ENCODE measurements at regions of chr14 and their contacts with region 1.

Region 1: DNA sequence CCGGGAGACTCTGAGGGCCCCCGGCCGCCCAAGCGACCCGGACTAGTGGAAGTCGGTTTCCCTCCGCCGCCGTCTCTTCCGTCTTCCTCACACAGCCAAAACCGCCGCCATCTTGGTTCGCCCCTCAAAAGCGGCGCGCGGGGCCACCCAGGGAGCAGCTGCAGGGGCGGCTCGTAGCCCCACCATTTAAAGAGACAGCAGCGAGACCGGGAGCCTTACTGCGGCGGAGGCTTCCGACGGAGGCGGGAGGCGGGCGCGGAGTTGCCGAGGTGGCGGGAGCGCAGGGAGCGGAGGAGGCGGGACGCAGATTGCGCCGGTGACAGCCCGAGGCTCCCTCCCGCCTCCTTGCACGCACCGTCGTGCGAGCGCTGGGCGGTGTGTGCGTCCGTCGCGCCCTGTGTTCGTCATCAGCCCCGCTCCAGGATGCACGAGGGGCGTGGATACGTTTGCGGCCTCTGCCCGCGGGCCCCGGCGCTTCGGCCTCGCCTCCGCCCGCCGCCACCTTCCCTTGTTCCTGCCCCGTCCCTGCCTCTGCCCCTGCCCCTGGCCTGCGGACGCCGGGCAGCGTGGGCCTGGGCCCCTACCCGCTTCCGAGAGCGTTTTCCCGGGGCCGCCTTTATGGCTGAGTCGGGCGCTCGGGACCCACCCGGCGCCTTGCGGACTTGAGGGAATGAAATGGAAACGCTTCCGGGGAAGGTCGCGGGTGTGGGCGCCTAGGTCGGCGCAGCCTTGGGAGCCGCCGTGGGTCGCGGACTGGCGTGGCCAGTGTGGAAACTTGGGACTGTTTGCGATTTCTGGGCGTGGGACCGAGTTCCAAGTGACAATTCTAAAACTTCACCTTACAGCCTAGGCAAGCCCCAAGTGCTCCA is at the start of gene PPP4R3A:
- DNase-seq: peak; percentile 88
- ATAC-seq: peak; percentile 87
- H3K4me3 ChIP-seq: peak within 1 kb of the TSS; percentile 99
- H3K27ac ChIP-seq: peak within 1 kb of the TSS; percentile 97
- H3K4me1 ChIP-seq: peaks cover 5% of the 10 kb centered on the region
- H3K27me3 ChIP-seq: no peaks in the 10 kb centered on the region
- CTCF ChIP-seq: no peak
- EP300 ChIP-seq: peak; percentile 54 to 61; a peak in 2 of 4 replicates
- POLR2A ChIP-seq: peak; percentile 95
- RAD21 ChIP-seq: no peak
- polyA plus RNA-seq, gene PPP4R3A: 19.4 to 28.2 TPM

Region 2: DNA sequence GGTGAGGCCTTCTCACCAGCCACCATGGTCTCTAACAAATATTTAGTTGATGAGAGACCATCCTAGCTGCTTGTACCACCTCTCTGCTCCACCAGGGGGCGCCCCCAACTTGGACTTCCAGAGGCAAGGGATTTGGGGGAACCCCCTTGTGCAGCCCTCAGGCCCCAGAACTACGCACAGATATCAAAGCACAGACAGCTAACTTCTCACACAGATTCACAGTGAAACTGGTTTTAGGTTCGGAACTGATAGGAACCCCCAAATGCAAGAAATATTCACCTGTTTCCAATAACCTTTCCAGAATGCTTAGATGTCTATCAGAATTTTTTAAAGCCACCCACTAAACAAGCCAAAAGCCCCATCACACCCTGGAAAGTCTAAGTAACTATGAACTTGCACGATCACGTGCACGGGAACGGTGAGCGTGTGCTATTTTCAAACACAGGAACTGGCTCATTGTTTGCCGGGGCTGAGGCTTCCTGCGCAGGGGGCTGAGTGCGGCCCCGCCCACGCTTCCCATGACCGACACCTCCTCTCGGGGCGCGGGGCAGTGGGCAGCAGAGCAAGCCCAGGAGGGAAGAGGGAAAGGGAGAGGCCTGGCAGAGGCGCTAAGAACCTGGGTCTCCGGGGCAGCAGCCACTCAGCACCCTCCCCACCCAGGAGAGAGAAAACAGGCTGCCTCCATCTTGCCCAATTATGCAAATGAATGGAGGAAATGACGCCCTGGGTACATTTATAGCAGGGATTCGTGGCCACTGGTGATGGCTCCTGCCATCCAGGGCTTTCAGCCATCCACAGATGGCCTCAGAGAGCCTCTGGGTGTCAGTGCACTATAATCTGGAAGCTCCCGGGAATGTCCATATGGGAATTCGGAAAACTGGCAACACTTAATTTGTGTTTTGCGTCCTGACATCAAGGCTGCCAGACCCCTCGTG is 186.5 kb before region 1 on chr14:
- CTCF ChIA-PET with region 1: no interaction called
- POLR2A ChIA-PET with region 1: no interaction called
- RAD21 ChIA-PET with region 1: interaction called, 6 read pairs
- SMC1A ChIA-PET with region 1: interaction called, 3 read pairs
- in situ Hi-C with region 1: no loop called
- intact Hi-C with region 1: loop called (anchors 10 kb)
- DNase-seq: peak; percentile 75
- ATAC-seq: peak; percentile 89
- H3K4me3 ChIP-seq: peak overlapping the region; percentile 11; the same call in 1 of the 2 replicates
- H3K27ac ChIP-seq: peak overlapping the region; percentile 87
- H3K4me1 ChIP-seq: peaks cover 39% of the 10 kb centered on the region
- H3K27me3 ChIP-seq: no peaks in the 10 kb centered on the region
- CTCF ChIP-seq: peak; percentile 95 to 97 (median 96)
- EP300 ChIP-seq: peak; percentile 29 to 30; a peak in 2 of 4 replicates
- POLR2A ChIP-seq: peak; percentile 66
- RAD21 ChIP-seq: peak; percentile 98

Region 3: DNA sequence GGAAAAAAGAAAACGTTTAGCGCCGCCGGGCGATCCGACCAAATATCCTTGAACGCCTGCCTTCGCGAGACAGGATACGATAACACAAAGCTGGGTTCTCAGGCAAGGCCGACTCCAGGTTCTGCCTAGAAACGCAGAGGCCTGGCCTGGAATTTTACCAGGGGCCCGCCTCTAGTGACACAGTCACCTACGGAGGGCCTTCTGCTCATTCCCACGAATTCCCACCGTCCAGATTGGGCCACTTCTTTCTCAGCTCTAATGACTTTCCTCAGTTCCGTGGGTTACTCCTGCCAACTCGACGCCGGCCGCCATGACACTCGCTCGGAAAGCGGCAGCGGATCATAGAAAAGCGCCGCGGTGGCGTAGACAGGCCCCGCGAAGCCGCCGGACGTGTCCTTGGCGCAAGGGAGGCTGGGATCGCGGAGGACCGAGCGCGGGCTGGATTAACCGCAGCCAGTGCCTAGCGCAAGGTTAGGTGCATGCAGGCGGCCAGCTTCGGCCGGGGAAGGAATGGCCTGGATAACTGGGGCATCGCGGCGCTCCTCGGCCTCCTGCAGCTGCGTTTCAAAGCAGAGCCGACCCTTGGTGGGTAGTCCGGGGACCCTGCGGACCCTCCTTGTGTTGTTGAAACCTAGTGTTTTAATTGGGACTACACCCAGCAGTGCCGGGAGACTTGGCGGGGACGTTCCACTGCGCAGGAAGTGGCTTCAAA is 529.5 kb after region 1 on chr14 and contains the start of gene TRIP11:
- CTCF ChIA-PET with region 1: no interaction called
- POLR2A ChIA-PET with region 1: no interaction called
- RAD21 ChIA-PET with region 1: interaction called, 3 read pairs
- SMC1A ChIA-PET with region 1: no interaction called
- in situ Hi-C with region 1: no loop called
- intact Hi-C with region 1: loop called (anchors 5 kb)
- DNase-seq: peak; percentile 72
- ATAC-seq: peak; percentile 98
- H3K4me3 ChIP-seq: peak within 1 kb of the TSS; percentile 82
- H3K27ac ChIP-seq: peak within 1 kb of the TSS; percentile 99
- H3K4me1 ChIP-seq: no peaks in the 10 kb centered on the region
- H3K27me3 ChIP-seq: no peaks in the 10 kb centered on the region
- CTCF ChIP-seq: no peak
- EP300 ChIP-seq: no peak
- POLR2A ChIP-seq: peak; percentile 99
- RAD21 ChIP-seq: no peak
- polyA plus RNA-seq, gene TRIP11: 7.1 to 32.0 TPM